Naive thymus-derived CD4-positive, alpha-beta T cell (primary cell): ENCODE measurements at regions of chr2 and their contacts with region 1.

Region 1: GRCh38 chr2:234102112-234102511 is 51.6 kb downstream of the SPP2 start:
- DNase-seq: peak in 7 of 9 donors; percentile 16 to 64 (median 47)
- ATAC-seq: peak; percentile 73
- H3K4me3 ChIP-seq: no peak overlapping the region
- H3K4me3 Mint-ChIP-seq: peak overlapping the region in 8 of 10 donors; percentile 4 to 64 (median 28)
- H3K27ac ChIP-seq: no peak overlapping the region
- H3K27ac Mint-ChIP-seq: peak overlapping the region in 3 of 9 donors; percentile 9 to 64 (median 43)
- H3K4me1 ChIP-seq: peaks cover 36 to 37% of the 10 kb centered on the region in 2 donors
- H3K4me1 Mint-ChIP-seq: peaks cover 25 to 55% (median 43%) of the 10 kb centered on the region in 7 donors
- H3K27me3 ChIP-seq: no peaks in the 10 kb centered on the region
- H3K27me3 Mint-ChIP-seq: peaks cover 0 to 30% (median 0%) of the 10 kb centered on the region in 5 donors

Region 2: DNA sequence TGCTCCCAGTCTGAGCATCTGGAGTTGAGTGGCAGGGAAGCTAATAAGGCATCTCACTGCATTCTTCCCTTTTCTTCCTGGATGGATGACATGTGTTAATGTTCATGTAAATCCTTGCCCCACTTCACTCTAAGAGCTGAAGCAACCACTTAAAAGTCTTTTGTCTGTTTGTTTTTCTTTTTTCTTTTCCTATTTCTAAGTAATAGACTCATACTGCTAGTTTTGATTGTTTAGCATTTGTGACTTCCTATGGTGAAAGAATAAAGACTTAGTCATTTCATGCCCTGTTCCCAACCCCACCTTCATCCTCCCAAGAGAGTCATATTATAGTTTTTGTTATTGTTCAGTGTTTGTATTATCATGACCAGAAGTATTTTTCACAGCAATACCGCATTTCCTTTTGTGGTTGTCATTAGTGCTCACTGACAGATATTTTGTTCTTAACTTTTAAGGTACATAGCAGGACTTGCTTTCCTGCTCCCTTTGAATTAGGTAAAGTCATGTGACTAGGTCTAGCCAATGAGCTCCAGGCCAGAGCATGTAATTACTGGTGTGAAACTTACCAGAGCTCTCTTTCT is 69.7 kb before region 1 on chr2:
- CTCF ChIA-PET with region 1: no interaction called
- POLR2A ChIA-PET with region 1: no interaction called
- intact Hi-C with region 1: loop called in 1 of 2 experiments (anchors 5 kb)
- DNase-seq: peak in 4 of 9 donors; percentile 16 to 40 (median 33)
- ATAC-seq: peak; percentile 82
- H3K4me3 ChIP-seq: no peak overlapping the region
- H3K4me3 Mint-ChIP-seq: peak overlapping the region in 5 of 10 donors; percentile 4 to 54 (median 39)
- H3K27ac ChIP-seq: no peak overlapping the region
- H3K27ac Mint-ChIP-seq: peak overlapping the region in 7 of 9 donors; percentile 1 to 72 (median 15)
- H3K4me1 ChIP-seq: peaks cover 13 to 55% of the 10 kb centered on the region in 2 donors
- H3K4me1 Mint-ChIP-seq: peaks cover 19 to 42% (median 20%) of the 10 kb centered on the region in 7 donors
- H3K27me3 ChIP-seq: no peaks in the 10 kb centered on the region
- H3K27me3 Mint-ChIP-seq: peaks cover 0 to 43% (median 0%) of the 10 kb centered on the region in 5 donors